ENCODE measurements at regions of chr5 and their contacts with region 1.

Region 1: GRCh38 chr5:99998319-99998718 is 536.9 kb upstream of the FAM174A start:
- DNase-seq: no peak
- ATAC-seq: no peak
- H3K4me3 Mint-ChIP-seq: no peak overlapping the region
- H3K27ac Mint-ChIP-seq: no peak overlapping the region
- H3K4me1 Mint-ChIP-seq: no peaks in the 10 kb centered on the region
- H3K27me3 Mint-ChIP-seq: no peaks in the 10 kb centered on the region
- CTCF ChIP-seq: no peak

Region 2: DNA sequence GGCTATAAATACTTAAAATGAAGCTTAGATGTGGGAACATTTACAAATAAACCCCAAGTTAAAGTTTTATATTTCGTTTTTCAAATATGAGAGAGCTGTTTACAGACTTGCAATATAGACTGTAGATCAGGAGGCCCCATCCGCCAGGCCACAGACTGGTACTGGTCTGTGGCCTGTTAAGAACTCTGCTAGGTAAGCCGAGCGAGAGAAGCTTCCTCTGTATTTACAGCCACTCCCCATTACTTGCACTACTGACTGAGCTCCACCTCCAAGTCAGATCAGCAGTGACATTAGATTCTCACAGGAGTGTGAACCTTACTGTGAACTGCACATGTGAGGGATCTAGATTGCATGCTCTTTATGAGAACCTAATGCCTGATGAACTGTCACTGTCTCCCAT is 24.5 kb before region 1 on chr5:
- CTCF ChIA-PET with region 1: no interaction called
- POLR2A ChIA-PET with region 1: no interaction called
- intact Hi-C with region 1: no loop called
- DNase-seq: no peak
- ATAC-seq: no peak
- H3K4me3 Mint-ChIP-seq: no peak overlapping the region
- H3K27ac Mint-ChIP-seq: no peak overlapping the region
- H3K4me1 Mint-ChIP-seq: no peaks in the 10 kb centered on the region
- H3K27me3 Mint-ChIP-seq: no peaks in the 10 kb centered on the region
- CTCF ChIP-seq: no peak

Region 3: DNA sequence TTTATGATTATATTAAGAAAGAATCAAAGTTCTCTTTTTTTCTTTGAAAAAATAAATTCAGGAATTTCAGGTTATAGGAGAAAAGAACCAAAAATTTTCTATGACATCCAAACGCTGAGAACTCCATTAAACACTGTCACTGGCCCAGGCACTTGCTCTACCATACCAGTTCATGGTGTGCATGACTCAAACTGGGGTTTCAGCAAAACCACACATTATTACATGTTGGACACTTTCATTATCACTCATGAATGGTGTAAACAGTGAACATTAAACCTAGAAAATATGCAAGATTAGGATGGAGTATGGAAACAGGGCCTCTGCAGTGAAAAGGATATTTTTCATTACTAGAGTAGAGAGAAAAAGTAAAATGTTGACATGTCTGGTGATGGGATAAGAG is 167.0 kb after region 1 on chr5:
- CTCF ChIA-PET with region 1: no interaction called
- POLR2A ChIA-PET with region 1: no interaction called
- intact Hi-C with region 1: no loop called
- DNase-seq: no peak
- ATAC-seq: no peak
- H3K4me3 Mint-ChIP-seq: no peak overlapping the region
- H3K27ac Mint-ChIP-seq: no peak overlapping the region
- H3K4me1 Mint-ChIP-seq: no peaks in the 10 kb centered on the region
- H3K27me3 Mint-ChIP-seq: no peaks in the 10 kb centered on the region
- CTCF ChIP-seq: no peak

Region 4: GRCh38 chr5:100270023-100270771 is 271.9 kb after region 1 on chr5:
- CTCF ChIA-PET with region 1: no interaction called
- POLR2A ChIA-PET with region 1: no interaction called
- intact Hi-C with region 1: loop called (anchors 5 kb)
- DNase-seq: no peak
- ATAC-seq: no peak
- H3K4me3 Mint-ChIP-seq: no peak overlapping the region
- H3K27ac Mint-ChIP-seq: no peak overlapping the region
- H3K4me1 Mint-ChIP-seq: no peaks in the 10 kb centered on the region
- H3K27me3 Mint-ChIP-seq: no peaks in the 10 kb centered on the region
- CTCF ChIP-seq: no peak